Calu3 (cell line): ENCODE measurements at regions of chr12 and their contacts with region 1.

Region 1: DNA sequence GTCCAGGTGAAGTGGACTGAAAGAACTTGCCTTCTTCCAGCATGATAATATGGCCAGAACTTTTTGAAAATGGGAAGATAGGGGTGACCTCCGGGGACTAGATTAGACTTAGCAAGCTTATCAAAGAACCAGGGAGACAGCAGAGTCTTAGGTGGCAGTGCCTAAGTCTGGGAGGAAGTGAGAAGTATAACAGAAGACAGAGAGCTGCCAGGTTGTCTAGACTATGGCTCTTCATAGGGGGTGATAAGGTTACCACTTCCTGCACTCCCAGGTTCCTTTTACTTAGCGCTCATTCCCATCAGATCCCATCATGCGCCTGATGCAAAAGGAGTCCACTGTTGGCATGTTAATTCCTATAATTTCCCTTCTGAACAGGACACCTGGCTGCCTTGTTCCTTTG is 69.9 kb downstream of the PLXNC1 start:
- DNase-seq: no peak
- H3K4me3 Mint-ChIP-seq: no peak overlapping the region
- H3K27ac Mint-ChIP-seq: no peak overlapping the region
- H3K4me1 Mint-ChIP-seq: no peaks in the 10 kb centered on the region
- H3K27me3 Mint-ChIP-seq: peaks cover 23% of the 10 kb centered on the region
- CTCF ChIP-seq: no peak

Region 2: DNA sequence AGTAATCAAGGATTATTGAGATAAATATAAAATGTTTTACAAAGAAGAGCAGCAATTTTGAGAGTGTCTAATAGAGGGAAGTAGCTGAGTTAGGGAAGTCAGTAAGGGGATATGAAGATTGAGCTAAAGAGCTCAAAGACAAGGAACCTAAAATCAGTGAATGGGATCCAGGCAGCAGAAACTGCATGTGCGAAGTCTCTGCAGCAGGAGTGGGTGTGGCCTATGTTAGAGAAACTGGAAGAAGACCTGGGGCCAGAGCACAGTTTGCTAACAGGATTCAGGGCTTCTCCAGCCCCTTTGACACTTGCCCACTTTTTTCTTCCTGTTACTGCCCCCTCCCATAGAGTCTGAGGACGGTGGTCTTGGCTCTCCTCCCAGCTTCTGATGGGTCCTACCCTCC is 106.1 kb before region 1 on chr12:
- CTCF ChIA-PET with region 1: no interaction called
- intact Hi-C with region 1: no loop called
- DNase-seq: no peak
- H3K4me3 Mint-ChIP-seq: no peak overlapping the region
- H3K27ac Mint-ChIP-seq: no peak overlapping the region
- H3K4me1 Mint-ChIP-seq: no peaks in the 10 kb centered on the region
- H3K27me3 Mint-ChIP-seq: peaks cover 73% of the 10 kb centered on the region
- CTCF ChIP-seq: no peak

Region 3: GRCh38 chr12:94745562-94745961 is 527.3 kb after region 1 on chr12:
- CTCF ChIA-PET with region 1: no interaction called
- intact Hi-C with region 1: loop called (anchors 5 kb)
- DNase-seq: no peak
- H3K4me3 Mint-ChIP-seq: no peak overlapping the region
- H3K27ac Mint-ChIP-seq: no peak overlapping the region
- H3K4me1 Mint-ChIP-seq: no peaks in the 10 kb centered on the region
- H3K27me3 Mint-ChIP-seq: peaks cover 44% of the 10 kb centered on the region
- CTCF ChIP-seq: no peak